K562 (cell line): ENCODE measurements at regions of chr10 and their contacts with region 1.

Region 1: GRCh38 chr10:94279835-94280709 is 82.7 kb downstream of the NOC3L start:
- DNase-seq: peak; percentile 51 to 63 (median 56)
- ATAC-seq: peak; percentile 91
- H3K4me3 ChIP-seq: no peak overlapping the region
- H3K27ac ChIP-seq: no peak overlapping the region
- H3K4me1 ChIP-seq: no peaks in the 10 kb centered on the region
- H3K27me3 ChIP-seq: no peaks in the 10 kb centered on the region
- CTCF ChIP-seq: peak; percentile 73 to 84 (median 75)
- EP300 ChIP-seq: no peak
- POLR2A ChIP-seq: no peak
- RAD21 ChIP-seq: peak; percentile 36 to 72

Region 2: GRCh38 chr10:94320285-94320914 is 40.3 kb after region 1 on chr10:
- CTCF ChIA-PET with region 1: interaction called, 4 read pairs
- POLR2A ChIA-PET with region 1: interaction called, 3 read pairs
- in situ Hi-C with region 1: no loop called
- intact Hi-C with region 1: loop called (anchors 2 kb)
- DNase-seq: peak; percentile 30 to 72 (median 48)
- ATAC-seq: peak; percentile 74
- H3K4me3 ChIP-seq: no peak overlapping the region
- H3K27ac ChIP-seq: no peak overlapping the region
- H3K4me1 ChIP-seq: no peaks in the 10 kb centered on the region
- H3K27me3 ChIP-seq: no peaks in the 10 kb centered on the region
- CTCF ChIP-seq: peak; percentile 64 to 68 (median 64)
- EP300 ChIP-seq: no peak
- POLR2A ChIP-seq: no peak
- RAD21 ChIP-seq: peak; percentile 50 to 70

Region 3: DNA sequence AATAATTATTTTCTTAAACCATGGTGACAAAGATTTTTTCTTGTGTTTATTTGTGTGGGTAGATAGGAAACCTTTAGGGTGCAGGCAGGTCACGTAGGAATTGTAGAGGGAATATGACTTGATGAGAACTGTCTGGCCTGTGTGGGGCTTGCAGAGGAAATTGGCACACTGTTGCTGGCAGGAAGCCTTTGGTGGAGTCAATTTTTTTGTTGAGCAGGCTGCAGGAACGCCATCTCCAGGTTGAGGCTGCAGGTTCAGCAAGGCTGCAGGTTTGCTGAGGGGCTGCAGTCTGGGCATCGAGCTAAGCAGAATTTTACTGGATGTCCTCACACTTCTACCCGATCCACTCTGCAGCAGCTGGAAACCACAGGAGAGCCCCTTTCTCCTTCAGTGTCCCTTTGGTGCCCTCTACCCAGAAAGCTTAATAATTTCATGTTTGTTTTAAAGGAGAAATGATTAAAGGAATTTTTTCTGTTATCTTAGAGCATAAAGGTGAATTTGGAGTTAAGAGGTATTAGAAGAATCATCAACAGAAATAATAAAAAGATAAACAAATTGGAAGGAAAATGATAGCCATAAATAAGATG is 159.3 kb after region 1 on chr10:
- CTCF ChIA-PET with region 1: interaction called, 13 read pairs
- POLR2A ChIA-PET with region 1: no interaction called
- in situ Hi-C with region 1: no loop called
- intact Hi-C with region 1: loop called (anchors 2 kb)
- DNase-seq: no peak
- ATAC-seq: no peak
- H3K4me3 ChIP-seq: no peak overlapping the region
- H3K27ac ChIP-seq: no peak overlapping the region
- H3K4me1 ChIP-seq: no peaks in the 10 kb centered on the region
- H3K27me3 ChIP-seq: no peaks in the 10 kb centered on the region
- CTCF ChIP-seq: no peak
- EP300 ChIP-seq: no peak
- POLR2A ChIP-seq: no peak
- RAD21 ChIP-seq: no peak